Naive thymus-derived CD4-positive, alpha-beta T cell (primary cell): ENCODE measurements at regions of chr6 and their contacts with region 1.

Region 1: DNA sequence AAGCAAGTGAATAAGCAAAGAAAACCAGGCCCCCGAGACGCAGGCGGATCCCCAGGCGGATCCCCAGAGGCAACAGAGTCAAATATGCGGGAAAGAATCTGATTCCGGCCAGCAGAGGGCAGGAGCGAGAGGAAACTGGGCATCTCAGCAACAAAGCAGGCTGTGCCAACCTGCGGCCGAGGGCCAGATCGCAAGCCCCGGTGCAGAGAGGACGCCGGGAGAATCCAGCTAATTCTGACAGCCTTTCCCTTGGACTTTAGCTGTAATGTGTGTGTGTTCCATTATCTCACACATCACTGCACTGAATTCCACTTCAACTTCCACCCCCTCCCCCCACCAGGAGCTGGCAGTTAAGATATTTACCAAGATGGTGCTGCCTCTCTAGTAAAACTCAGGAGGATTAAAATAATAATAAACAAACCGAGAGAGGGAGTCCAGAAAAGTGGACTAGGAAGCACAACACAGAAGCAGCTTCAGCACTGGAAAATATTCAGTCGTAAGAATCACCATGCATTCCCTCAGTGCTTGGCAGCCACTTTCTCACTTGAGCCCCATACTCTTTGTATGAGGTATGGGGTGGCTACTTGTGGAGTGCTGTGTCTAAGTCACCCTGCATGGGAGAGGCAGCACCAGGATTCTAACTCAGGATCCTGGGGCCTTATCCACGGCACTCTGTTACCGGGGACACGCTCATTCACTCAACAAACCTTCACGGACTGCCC is 66.2 kb upstream of the SNX9 start:
- DNase-seq: peak; percentile 57 to 79 (median 73)
- ATAC-seq: peak; percentile 72
- H3K4me3 ChIP-seq: no peak overlapping the region
- H3K4me3 Mint-ChIP-seq: peak overlapping the region in 9 of 10 donors; percentile 42 to 84 (median 72)
- H3K27ac ChIP-seq: no peak overlapping the region
- H3K27ac Mint-ChIP-seq: peak overlapping the region; percentile 27 to 98 (median 92)
- H3K4me1 ChIP-seq: peaks cover 12 to 55% of the 10 kb centered on the region in 2 donors
- H3K4me1 Mint-ChIP-seq: peaks cover 42 to 83% (median 75%) of the 10 kb centered on the region in 7 donors
- H3K27me3 ChIP-seq: no peaks in the 10 kb centered on the region
- H3K27me3 Mint-ChIP-seq: peaks cover 0 to 42% (median 0%) of the 10 kb centered on the region in 5 donors

Region 2: DNA sequence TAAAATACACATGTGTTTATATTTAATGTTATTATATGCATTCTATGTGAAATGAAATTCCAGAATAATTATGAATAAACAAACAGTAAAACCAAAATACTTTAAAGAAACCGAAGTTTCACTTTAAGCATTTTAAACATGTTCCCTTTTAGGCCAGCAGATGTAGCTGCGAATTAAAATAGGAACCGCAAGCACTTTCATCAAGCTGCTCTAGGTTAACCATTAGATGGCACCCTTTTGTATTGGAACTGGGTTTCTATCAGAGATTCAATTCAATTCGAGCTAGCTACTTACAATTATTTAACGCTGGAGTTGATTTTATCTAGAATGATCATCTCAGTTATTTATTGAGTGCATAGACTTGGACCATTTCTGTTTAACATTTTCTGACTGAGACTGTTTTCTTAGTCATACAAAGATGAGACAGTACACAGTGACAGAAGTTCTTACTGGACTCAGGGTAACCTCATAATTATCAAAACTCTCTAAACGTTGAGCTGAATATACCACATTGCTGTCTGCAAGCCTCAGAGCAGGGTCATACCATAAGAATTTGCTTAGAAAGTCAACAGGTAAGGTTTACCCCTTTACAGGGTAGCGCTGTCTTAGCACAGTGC is 442.1 kb before region 1 on chr6:
- CTCF ChIA-PET with region 1: no interaction called
- POLR2A ChIA-PET with region 1: no interaction called
- intact Hi-C with region 1: loop called (anchors 5 to 10 kb)
- DNase-seq: peak in 7 of 9 donors; percentile 43 to 65 (median 52)
- ATAC-seq: peak; percentile 87
- H3K4me3 ChIP-seq: no peak overlapping the region
- H3K4me3 Mint-ChIP-seq: no peak overlapping the region
- H3K27ac ChIP-seq: no peak overlapping the region
- H3K27ac Mint-ChIP-seq: peak overlapping the region in 3 of 9 donors; percentile 16 to 48 (median 33)
- H3K4me1 ChIP-seq: no peaks in the 10 kb centered on the region
- H3K4me1 Mint-ChIP-seq: peaks cover 0 to 22% (median 6%) of the 10 kb centered on the region in 7 donors
- H3K27me3 ChIP-seq: no peaks in the 10 kb centered on the region
- H3K27me3 Mint-ChIP-seq: no peaks in the 10 kb centered on the region

Region 3: DNA sequence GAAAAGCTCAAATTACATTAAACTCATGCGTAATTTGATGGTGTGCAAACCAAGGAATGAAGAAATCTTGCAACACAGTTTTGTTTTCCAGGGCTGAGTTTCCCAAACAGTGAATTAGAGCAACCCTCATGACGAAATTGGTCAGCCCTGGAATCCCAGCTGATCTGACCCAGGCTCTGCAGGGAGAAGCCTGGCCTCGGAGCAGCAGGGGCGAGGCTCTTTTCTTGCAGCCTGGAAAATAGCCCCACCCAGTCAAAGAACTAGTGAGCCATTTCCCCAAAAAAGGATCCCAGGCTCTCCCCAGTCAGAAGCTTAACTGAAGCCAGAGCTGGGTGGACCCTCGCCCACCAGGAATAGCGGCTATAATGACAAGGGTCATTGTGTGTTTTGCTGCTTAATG is 41.1 kb before region 1 on chr6:
- CTCF ChIA-PET with region 1: no interaction called
- POLR2A ChIA-PET with region 1: no interaction called
- intact Hi-C with region 1: no loop called
- DNase-seq: no peak
- ATAC-seq: no peak
- H3K4me3 ChIP-seq: no peak overlapping the region
- H3K4me3 Mint-ChIP-seq: no peak overlapping the region
- H3K27ac ChIP-seq: no peak overlapping the region
- H3K27ac Mint-ChIP-seq: peak overlapping the region in 1 of 9 donors; percentile 23
- H3K4me1 ChIP-seq: no peaks in the 10 kb centered on the region
- H3K4me1 Mint-ChIP-seq: peaks cover 0 to 6% (median 0%) of the 10 kb centered on the region in 7 donors
- H3K27me3 ChIP-seq: no peaks in the 10 kb centered on the region
- H3K27me3 Mint-ChIP-seq: peaks cover 0 to 4% (median 0%) of the 10 kb centered on the region in 5 donors

Region 4: DNA sequence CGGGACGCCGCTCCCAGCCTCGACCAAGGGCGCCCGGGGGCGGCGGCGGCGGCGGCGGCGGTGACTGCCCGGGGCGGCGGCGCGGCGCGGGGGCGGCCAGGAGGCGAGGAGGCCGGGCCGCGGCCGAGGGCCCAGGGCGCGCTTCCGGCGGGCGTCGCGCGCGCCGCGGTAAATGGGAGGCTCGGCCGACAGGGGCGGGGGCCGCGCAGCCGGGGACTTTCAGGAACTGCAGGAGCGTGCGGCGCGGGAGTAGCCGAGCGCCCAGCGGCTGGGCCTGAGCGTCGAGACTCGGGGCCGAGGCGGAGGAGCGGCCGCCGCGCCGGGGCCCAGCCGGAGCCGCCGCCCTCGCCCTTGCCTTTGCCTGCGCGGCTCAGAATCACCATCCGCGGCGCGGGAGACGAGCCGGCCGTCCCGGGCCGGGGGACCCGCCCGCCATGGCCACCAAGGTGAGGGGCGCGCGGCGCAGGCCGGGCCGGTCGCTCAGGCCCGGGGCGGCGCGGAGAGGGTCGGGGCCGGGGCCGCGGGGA is 66.2 kb after region 1 on chr6 and contains the start of gene SNX9:
- CTCF ChIA-PET with region 1: interaction called, 8 read pairs
- POLR2A ChIA-PET with region 1: no interaction called
- intact Hi-C with region 1: loop called (anchors 1 kb)
- DNase-seq: peak in 8 of 9 donors; percentile 27 to 74 (median 56)
- ATAC-seq: peak; percentile 77
- H3K4me3 ChIP-seq: peak within 1 kb of the TSS; percentile 60
- H3K4me3 Mint-ChIP-seq: peak within 1 kb of the TSS; percentile 88 to 100 (median 96)
- H3K27ac ChIP-seq: peak within 1 kb of the TSS; percentile 96
- H3K27ac Mint-ChIP-seq: peak within 1 kb of the TSS; percentile 95 to 100 (median 99)
- H3K4me1 ChIP-seq: peaks cover 9 to 16% of the 10 kb centered on the region in 2 donors
- H3K4me1 Mint-ChIP-seq: peaks cover 15 to 70% (median 57%) of the 10 kb centered on the region in 7 donors
- H3K27me3 ChIP-seq: no peaks in the 10 kb centered on the region
- H3K27me3 Mint-ChIP-seq: peaks cover 0 to 42% (median 0%) of the 10 kb centered on the region in 5 donors
- total RNA-seq, gene SNX9: 13.4 to 39.2 (median 36.4) TPM

Region 5: DNA sequence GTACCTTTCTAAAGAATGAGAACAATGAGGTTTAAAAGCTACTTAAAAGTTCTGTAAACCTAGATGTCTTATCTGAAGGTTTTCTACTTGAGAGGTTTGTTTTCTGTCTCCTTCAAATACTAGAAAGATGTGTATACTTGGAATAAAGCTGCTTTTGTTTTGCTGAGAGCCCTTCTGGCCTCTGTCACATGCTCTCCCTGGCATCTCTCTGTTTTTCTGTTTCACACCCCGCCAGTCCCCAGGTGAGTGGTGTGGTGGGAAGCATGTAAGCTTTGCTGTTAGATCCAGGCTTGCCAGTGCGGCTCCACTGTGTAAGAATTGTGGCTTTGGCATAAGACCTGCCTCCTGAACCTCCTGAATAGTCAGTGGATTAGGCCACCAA is 123.0 kb after region 1 on chr6:
- CTCF ChIA-PET with region 1: interaction called, 51 read pairs
- POLR2A ChIA-PET with region 1: interaction called, 5 read pairs
- intact Hi-C with region 1: loop called (anchors 1 to 2 kb)
- DNase-seq: no peak
- ATAC-seq: no peak
- H3K4me3 ChIP-seq: no peak overlapping the region
- H3K4me3 Mint-ChIP-seq: peak overlapping the region in 5 of 10 donors; percentile 4 to 68 (median 19)
- H3K27ac ChIP-seq: no peak overlapping the region
- H3K27ac Mint-ChIP-seq: peak overlapping the region in 8 of 9 donors; percentile 2 to 99 (median 70)
- H3K4me1 ChIP-seq: peaks cover 0 to 46% of the 10 kb centered on the region in 2 donors
- H3K4me1 Mint-ChIP-seq: peaks cover 16 to 88% (median 84%) of the 10 kb centered on the region in 7 donors
- H3K27me3 ChIP-seq: no peaks in the 10 kb centered on the region
- H3K27me3 Mint-ChIP-seq: no peaks in the 10 kb centered on the region

Region 6: DNA sequence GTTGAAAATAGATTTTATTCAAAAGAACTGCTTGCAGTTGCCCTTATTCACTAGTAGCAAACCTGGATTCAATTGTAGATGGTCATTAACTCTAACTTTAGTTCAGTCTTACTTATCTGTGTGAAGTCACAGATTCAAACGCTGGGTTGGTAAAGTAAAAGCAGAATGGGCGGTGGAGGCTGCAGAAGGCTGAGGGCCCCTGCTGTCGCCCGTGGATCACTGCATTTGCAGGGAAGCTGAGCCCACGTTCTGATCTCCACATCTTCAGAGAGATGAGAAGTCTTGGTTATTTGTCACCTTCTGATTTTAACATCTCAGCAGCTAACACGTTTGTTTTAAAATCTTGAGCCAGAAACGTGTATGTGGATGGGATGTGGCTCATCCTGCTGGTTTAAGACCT is 141.3 kb after region 1 on chr6:
- CTCF ChIA-PET with region 1: interaction called, 7 read pairs
- POLR2A ChIA-PET with region 1: interaction called, 4 read pairs
- intact Hi-C with region 1: loop called in 1 of 2 experiments (anchors 1 kb)
- DNase-seq: peak in 7 of 9 donors; percentile 39 to 68 (median 48)
- ATAC-seq: peak; percentile 55
- H3K4me3 ChIP-seq: no peak overlapping the region
- H3K4me3 Mint-ChIP-seq: no peak overlapping the region
- H3K27ac ChIP-seq: no peak overlapping the region
- H3K27ac Mint-ChIP-seq: peak overlapping the region in 8 of 9 donors; percentile 6 to 92 (median 50)
- H3K4me1 ChIP-seq: peaks cover 0 to 12% of the 10 kb centered on the region in 2 donors
- H3K4me1 Mint-ChIP-seq: peaks cover 5 to 40% (median 26%) of the 10 kb centered on the region in 7 donors
- H3K27me3 ChIP-seq: no peaks in the 10 kb centered on the region
- H3K27me3 Mint-ChIP-seq: no peaks in the 10 kb centered on the region

Region 7: GRCh38 chr6:158072083-158072721 is 315.3 kb after region 1 on chr6:
- CTCF ChIA-PET with region 1: no interaction called
- POLR2A ChIA-PET with region 1: no interaction called
- intact Hi-C with region 1: loop called (anchors 1 to 2 kb)
- DNase-seq: peak; percentile 28 to 69 (median 65)
- ATAC-seq: peak; percentile 85
- H3K4me3 ChIP-seq: no peak overlapping the region
- H3K4me3 Mint-ChIP-seq: no peak overlapping the region
- H3K27ac ChIP-seq: no peak overlapping the region
- H3K27ac Mint-ChIP-seq: peak overlapping the region; percentile 32 to 91 (median 55)
- H3K4me1 ChIP-seq: peaks cover 0 to 5% of the 10 kb centered on the region in 2 donors
- H3K4me1 Mint-ChIP-seq: peaks cover 5 to 31% (median 6%) of the 10 kb centered on the region in 7 donors
- H3K27me3 ChIP-seq: no peaks in the 10 kb centered on the region
- H3K27me3 Mint-ChIP-seq: no peaks in the 10 kb centered on the region